ENCODE measurements at regions of chr1 and their contacts with region 1.

Region 1: DNA sequence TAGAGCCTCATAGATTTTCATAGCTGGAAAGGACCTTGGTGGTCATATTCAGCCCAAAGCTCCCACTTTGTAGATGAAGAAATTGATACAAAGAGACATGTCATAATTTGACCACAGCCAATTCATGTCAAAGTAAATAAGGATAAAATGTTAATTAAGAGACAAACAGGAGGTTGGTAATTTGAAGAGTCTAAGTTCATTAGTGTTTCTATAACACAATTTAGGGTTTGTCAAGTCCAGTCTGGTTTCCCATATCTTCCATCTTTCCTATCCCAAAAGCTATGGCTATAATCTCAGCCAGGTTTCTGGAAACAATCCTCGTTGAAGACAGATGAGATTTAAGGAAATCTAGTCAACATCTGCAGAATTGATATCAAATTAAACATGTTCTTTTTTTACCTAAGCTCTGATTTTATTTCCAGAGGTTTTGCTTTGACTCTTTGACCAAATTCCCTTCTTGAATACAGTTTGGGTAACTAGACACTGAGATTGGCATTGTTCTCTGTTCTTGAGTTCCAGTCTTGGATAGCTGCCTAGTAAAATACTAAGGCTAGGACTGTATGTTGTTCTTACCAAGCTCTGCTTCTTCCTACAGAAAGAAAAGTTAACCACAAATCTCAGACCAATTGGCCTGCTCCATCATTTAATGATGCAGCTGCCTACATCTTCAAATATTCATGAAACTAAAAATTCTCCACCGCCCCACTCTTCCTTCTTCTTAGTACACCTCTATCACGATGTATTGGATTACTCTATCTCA is 62.0 kb downstream of the SLC44A5 start:
- DNase-seq: no peak
- ATAC-seq: no peak
- H3K4me3 ChIP-seq: no peak overlapping the region
- H3K27ac ChIP-seq: no peak overlapping the region
- H3K4me1 ChIP-seq: no peaks in the 10 kb centered on the region
- H3K27me3 ChIP-seq: no peaks in the 10 kb centered on the region
- CTCF ChIP-seq: no peak

Region 2: DNA sequence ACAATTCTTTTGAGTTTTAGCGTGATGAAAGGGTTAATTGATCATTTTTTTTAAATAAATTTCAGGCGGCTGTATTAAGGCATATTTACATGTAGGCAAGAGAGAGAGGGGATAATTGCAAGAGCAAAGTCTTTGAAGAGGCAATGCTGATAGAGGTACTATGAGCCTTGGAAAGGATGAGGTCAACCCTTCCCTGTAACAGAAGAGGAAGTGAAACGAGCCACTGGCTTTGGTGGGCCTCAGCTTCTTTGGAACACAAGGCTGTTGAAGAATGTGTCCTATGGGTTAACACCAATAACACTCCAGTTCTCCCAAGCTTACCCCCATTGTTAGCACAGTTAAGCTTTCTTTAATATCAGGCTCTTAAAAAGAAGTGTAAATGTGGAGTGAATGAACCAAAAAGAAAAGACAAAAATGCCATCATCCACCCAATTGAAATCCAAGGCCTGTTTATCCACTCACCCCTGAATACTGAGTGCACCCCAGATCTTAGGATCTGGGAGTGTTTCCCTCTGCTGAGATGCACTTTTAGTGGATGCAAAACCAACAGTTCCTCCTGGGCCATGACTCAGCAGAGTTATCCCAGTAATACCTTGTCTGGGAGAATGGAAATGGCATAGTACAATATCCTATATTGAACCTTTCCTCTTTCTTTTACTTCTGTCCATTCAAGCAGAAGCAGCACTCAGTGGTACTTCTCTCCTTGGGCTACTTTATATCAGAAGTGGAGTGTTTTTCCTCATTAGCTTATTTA is 154.3 kb before region 1 on chr1:
- CTCF ChIA-PET with region 1: no interaction called
- POLR2A ChIA-PET with region 1: no interaction called
- in situ Hi-C with region 1: no loop called
- intact Hi-C with region 1: no loop called
- DNase-seq: no peak
- ATAC-seq: no peak
- H3K4me3 ChIP-seq: no peak overlapping the region
- H3K27ac ChIP-seq: no peak overlapping the region
- H3K4me1 ChIP-seq: no peaks in the 10 kb centered on the region
- H3K27me3 ChIP-seq: no peaks in the 10 kb centered on the region
- CTCF ChIP-seq: no peak

Region 3: GRCh38 chr1:75559136-75559535 is 10.2 kb after region 1 on chr1:
- CTCF ChIA-PET with region 1: interaction called, 16 read pairs
- POLR2A ChIA-PET with region 1: no interaction called
- in situ Hi-C with region 1: no loop called
- intact Hi-C with region 1: no loop called
- DNase-seq: no peak
- ATAC-seq: no peak
- H3K4me3 ChIP-seq: no peak overlapping the region
- H3K27ac ChIP-seq: no peak overlapping the region
- H3K4me1 ChIP-seq: no peaks in the 10 kb centered on the region
- H3K27me3 ChIP-seq: no peaks in the 10 kb centered on the region
- CTCF ChIP-seq: no peak

Region 4: DNA sequence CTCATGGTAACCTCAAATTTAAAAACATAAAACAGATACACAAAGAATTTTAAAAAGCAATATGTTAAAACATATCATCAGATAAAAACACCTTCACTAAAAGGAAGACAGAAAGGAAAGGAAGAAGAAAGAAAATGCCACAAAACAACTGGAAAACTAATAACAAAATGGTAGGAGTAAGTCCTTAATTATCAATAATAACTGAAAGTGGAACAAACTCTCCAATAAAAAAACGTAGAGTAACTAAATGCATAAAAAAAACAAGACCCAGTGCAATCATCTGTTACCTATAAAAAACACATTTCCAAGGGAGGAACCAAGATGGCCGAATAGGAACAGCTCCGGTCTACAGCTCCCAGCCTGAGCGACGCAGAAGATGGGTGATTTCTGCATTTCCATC is 128.5 kb after region 1 on chr1:
- CTCF ChIA-PET with region 1: no interaction called
- POLR2A ChIA-PET with region 1: no interaction called
- in situ Hi-C with region 1: no loop called
- intact Hi-C with region 1: no loop called
- DNase-seq: no peak
- ATAC-seq: no peak
- H3K4me3 ChIP-seq: peak overlapping the region in 1 of 2 experiments; percentile 27; a peak in 2 of 4 replicates
- H3K27ac ChIP-seq: no peak overlapping the region
- H3K4me1 ChIP-seq: no peaks in the 10 kb centered on the region
- H3K27me3 ChIP-seq: no peaks in the 10 kb centered on the region
- CTCF ChIP-seq: no peak

Measured in Panc1 (cell line).